ENCODE measurements at regions of chrX and their contacts with region 1.

Region 1: DNA sequence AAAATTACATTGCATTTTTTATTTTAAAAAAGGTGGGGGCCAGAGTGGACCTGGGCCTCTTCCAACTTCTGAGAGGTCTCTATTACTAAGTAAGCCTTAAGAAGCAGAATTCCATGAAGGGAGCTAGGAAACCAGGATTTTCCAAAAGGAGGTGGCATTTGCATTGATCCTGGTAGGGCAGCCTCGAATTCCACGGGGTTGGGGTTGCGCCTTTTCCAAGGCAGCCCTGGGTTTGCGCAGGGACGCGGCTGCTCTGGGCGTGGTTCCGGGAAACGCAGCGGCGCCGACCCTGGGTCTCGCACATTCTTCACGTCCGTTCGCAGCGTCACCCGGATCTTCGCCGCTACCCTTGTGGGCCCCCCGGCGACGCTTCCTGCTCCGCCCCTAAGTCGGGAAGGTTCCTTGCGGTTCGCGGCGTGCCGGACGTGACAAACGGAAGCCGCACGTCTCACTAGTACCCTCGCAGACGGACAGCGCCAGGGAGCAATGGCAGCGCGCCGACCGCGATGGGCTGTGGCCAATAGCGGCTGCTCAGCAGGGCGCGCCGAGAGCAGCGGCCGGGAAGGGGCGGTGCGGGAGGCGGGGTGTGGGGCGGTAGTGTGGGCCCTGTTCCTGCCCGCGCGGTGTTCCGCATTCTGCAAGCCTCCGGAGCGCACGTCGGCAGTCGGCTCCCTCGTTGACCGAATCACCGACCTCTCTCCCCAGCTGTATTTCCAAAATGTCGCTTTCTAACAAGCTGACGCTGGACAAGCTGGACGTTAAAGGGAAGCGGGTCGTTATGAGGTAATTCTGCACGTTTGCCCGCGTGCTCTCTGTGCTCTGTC is at the start of gene PGK1:
- DNase-seq: peak; percentile 96
- H3K4me3 ChIP-seq: peak within 1 kb of the TSS; percentile 81
- H3K27ac ChIP-seq: peak within 1 kb of the TSS; percentile 88
- H3K4me1 ChIP-seq: peaks cover 6% of the 10 kb centered on the region
- H3K27me3 ChIP-seq: no peaks in the 10 kb centered on the region
- CTCF ChIP-seq: no peak
- total RNA-seq, gene PGK1: 432 and 438 TPM in 2 replicates

Region 2: GRCh38 chrX:78139160-78140123 is 35.6 kb after region 1 on chrX and contains the start of gene TAF9B:
- CTCF ChIA-PET with region 1: no interaction called
- POLR2A ChIA-PET with region 1: interaction called, 12 read pairs
- intact Hi-C with region 1: no loop called
- DNase-seq: peak; percentile 91
- H3K4me3 ChIP-seq: peak within 1 kb of the TSS; percentile 75
- H3K27ac ChIP-seq: peak within 1 kb of the TSS; percentile 67
- H3K4me1 ChIP-seq: no peaks in the 10 kb centered on the region
- H3K27me3 ChIP-seq: no peaks in the 10 kb centered on the region
- CTCF ChIP-seq: no peak
- total RNA-seq, gene TAF9B: 40.7 and 41.6 TPM in 2 replicates